Calu3 (cell line): ENCODE measurements at regions of chr7 and their contacts with region 1.

Region 1: GRCh38 chr7:39603924-39604323 is 19.4 kb upstream of the RALA start:
- DNase-seq: no peak
- H3K4me3 Mint-ChIP-seq: no peak overlapping the region
- H3K27ac Mint-ChIP-seq: no peak overlapping the region
- H3K4me1 Mint-ChIP-seq: peaks cover 42% of the 10 kb centered on the region
- H3K27me3 Mint-ChIP-seq: no peaks in the 10 kb centered on the region
- CTCF ChIP-seq: no peak

Region 2: DNA sequence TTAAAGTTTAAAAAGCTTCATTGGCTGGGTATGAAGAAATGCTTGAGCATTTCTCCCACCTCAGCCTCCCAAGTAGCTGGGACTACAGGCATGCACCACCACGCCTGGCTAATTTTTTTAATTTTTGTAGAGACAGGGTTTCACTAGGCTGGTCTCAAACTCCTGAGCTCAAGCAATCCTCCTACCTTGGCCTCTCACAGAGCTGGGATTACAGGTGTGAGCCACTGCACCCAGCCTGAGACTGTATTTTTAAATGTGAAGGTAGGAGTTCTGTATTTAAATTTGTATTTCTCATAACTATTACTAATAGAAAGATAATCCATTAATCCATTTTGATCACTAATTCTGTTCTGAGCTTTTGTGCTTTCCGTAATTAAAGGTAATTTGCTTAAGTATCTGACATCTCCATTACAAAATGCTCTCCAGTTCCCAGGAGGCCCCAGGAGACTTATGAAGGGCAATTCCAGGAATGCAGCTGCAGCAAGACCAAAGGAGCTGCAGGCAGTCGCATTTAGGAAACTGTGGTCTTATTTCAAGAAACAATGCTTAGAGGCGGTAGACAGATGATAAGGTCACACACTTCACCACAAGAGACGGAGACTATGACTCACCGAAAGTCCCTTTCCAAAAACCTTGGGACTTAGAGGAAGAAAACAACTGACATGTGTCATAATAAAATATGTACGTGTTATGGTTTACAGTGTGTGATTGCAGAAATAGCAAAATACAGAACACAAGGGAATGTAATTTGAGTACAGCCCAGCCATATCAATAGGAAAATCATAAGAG is 14.4 kb before region 1 on chr7:
- CTCF ChIA-PET with region 1: interaction called, 3 read pairs
- intact Hi-C with region 1: loop called (anchors 1 kb)
- DNase-seq: peak; percentile 58
- H3K4me3 Mint-ChIP-seq: no peak overlapping the region
- H3K27ac Mint-ChIP-seq: peak overlapping the region; percentile 54
- H3K4me1 Mint-ChIP-seq: peaks cover 19% of the 10 kb centered on the region
- H3K27me3 Mint-ChIP-seq: no peaks in the 10 kb centered on the region
- CTCF ChIP-seq: no peak

Region 3: DNA sequence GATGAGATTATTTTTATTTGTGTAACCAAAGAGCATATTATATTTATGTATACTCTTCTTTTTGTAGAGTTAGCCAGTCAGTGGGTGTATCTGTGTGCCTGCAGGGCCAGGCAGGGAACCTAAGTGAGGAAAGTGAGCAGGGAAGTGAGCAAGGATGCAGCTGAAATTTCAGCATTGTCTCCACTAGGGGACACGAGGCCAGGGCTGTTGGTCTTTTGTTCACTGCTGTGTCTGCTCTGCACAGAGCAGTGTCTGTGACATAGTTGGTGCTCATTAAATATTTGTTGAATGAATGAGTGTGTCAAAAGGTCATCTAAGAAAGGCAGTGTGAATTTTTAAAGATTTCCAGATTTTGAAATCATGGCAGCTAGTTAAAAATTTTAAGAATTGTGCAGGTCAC is 582.7 kb after region 1 on chr7:
- CTCF ChIA-PET with region 1: no interaction called
- intact Hi-C with region 1: no loop called
- DNase-seq: no peak
- H3K4me3 Mint-ChIP-seq: no peak overlapping the region
- H3K27ac Mint-ChIP-seq: no peak overlapping the region
- H3K4me1 Mint-ChIP-seq: no peaks in the 10 kb centered on the region
- H3K27me3 Mint-ChIP-seq: no peaks in the 10 kb centered on the region
- CTCF ChIP-seq: peak; percentile 48